OCI-LY7 (cell line): ENCODE measurements at regions of chr6 and their contacts with region 1.

Region 1: GRCh38 chr6:110179401-110180227 is at the start of gene WASF1:
- DNase-seq: peak; percentile 97
- H3K4me3 ChIP-seq: peak within 1 kb of the TSS; percentile 83
- H3K27ac ChIP-seq: peak within 1 kb of the TSS; percentile 74
- H3K4me1 ChIP-seq: peaks cover 51% of the 10 kb centered on the region
- CTCF ChIP-seq: no peak
- total RNA-seq, gene WASF1: 21.7 and 34.6 TPM in 2 replicates

Region 2: GRCh38 chr6:110039364-110039980 is 140.1 kb before region 1 on chr6:
- CTCF ChIA-PET with region 1: interaction called, 3 read pairs
- POLR2A ChIA-PET with region 1: interaction called, 4 read pairs
- intact Hi-C with region 1: loop called (anchors 2 kb)
- DNase-seq: peak; percentile 92
- H3K4me3 ChIP-seq: peak overlapping the region; percentile 58
- H3K27ac ChIP-seq: peak overlapping the region; percentile 42
- H3K4me1 ChIP-seq: peaks cover 15% of the 10 kb centered on the region
- CTCF ChIP-seq: peak; percentile 96

Region 3: GRCh38 chr6:110083875-110084585 is 95.6 kb before region 1 on chr6:
- CTCF ChIA-PET with region 1: no interaction called
- POLR2A ChIA-PET with region 1: interaction called, 5 read pairs
- intact Hi-C with region 1: loop called (anchors 5 kb)
- DNase-seq: no peak
- H3K4me3 ChIP-seq: no peak overlapping the region
- H3K27ac ChIP-seq: no peak overlapping the region
- H3K4me1 ChIP-seq: peaks cover 36% of the 10 kb centered on the region
- CTCF ChIP-seq: no peak

Region 4: GRCh38 chr6:110233770-110234374 is 54.3 kb after region 1 on chr6:
- CTCF ChIA-PET with region 1: interaction called, 3 read pairs
- POLR2A ChIA-PET with region 1: interaction called, 3 read pairs
- intact Hi-C with region 1: loop called (anchors 2 kb)
- DNase-seq: peak; percentile 70
- H3K4me3 ChIP-seq: no peak overlapping the region
- H3K27ac ChIP-seq: no peak overlapping the region
- H3K4me1 ChIP-seq: peaks cover 12% of the 10 kb centered on the region
- CTCF ChIP-seq: no peak

Region 5: GRCh38 chr6:110329714-110330436 is 150.3 kb after region 1 on chr6:
- CTCF ChIA-PET with region 1: no interaction called
- POLR2A ChIA-PET with region 1: no interaction called
- intact Hi-C with region 1: no loop called
- DNase-seq: no peak
- H3K4me3 ChIP-seq: no peak overlapping the region
- H3K27ac ChIP-seq: no peak overlapping the region
- H3K4me1 ChIP-seq: no peaks in the 10 kb centered on the region
- CTCF ChIP-seq: no peak

Region 6: GRCh38 chr6:110873981-110874879 is 694.6 kb after region 1 on chr6 and contains the start of gene AMD1:
- CTCF ChIA-PET with region 1: no interaction called
- POLR2A ChIA-PET with region 1: no interaction called
- intact Hi-C with region 1: loop called (anchors 10 kb)
- DNase-seq: peak; percentile 98
- H3K4me3 ChIP-seq: peak within 1 kb of the TSS; percentile 94
- H3K27ac ChIP-seq: peak within 1 kb of the TSS; percentile 73
- H3K4me1 ChIP-seq: peaks cover 23% of the 10 kb centered on the region
- CTCF ChIP-seq: no peak
- total RNA-seq, gene AMD1: 64.2 and 74.3 TPM in 2 replicates